ENCODE measurements at regions of chr3 and their contacts with region 1.

Region 1: DNA sequence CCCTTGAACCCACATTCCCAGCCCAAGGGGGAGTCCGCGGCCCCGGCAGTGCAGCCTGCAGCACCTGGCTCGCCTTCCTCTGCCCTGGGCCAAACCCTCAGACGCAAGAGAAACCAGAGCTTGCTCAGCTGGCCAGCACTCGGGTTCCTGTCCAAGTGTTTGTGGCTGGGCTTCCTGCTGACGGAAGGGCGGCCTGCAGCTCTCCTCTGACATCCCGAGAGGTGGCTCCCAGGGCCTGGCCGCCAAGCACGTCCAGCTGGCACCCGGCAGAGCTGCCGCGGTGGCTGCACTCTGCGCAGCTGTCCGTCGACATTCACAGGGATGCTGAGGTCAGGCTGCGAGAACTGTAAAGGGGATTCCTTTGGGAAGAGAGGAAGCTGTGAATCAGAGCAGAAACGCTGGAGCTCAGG is 85.6 kb downstream of the CPN2 start:
- DNase-seq: peak; percentile 74
- H3K4me3 ChIP-seq: no peak overlapping the region
- H3K27ac ChIP-seq: peak overlapping the region; percentile 31 to 48
- H3K4me1 ChIP-seq: peaks cover 10% of the 10 kb centered on the region
- H3K27me3 ChIP-seq: no peaks in the 10 kb centered on the region
- CTCF ChIP-seq: no peak
- POLR2A ChIP-seq: peak; percentile 23

Region 2: DNA sequence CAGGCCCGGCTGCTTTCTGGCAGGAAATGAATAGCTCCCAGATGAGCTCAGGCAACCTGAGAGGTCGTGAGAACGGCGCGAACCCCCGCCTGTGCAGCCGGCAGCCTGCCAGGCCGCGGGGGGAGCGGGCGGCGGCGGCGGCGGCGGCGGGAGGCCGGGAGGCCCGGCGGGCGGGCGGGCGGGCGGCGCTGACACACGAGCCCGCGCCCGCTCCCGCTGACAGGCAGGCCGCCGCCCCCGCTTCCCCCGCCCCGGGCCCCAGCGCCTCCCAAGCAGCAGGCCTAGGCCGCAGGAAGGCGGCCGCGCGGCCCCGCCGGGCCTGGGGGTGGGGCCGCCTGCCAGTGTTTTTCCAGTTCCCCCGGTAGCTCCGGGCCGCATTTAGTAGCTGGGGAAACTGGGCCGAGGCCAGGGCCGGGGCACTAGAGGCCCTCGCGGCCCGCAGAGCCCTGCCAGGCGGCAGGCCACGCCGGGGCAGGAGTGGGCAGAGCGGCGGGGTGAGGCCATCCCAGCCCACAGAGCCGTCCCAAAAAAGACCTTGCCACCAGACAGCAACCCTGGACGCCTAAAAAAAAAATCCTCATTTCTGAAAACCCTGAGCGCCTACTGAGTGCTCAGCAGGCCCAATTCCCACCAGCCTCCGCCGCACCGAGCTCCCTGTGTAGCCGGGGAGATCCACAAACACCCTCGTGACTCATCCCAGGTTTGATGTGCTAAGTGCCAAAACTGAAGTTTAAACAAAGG is 123.9 kb before region 1 on chr3:
- intact Hi-C with region 1: loop called (anchors 5 kb)
- DNase-seq: peak; percentile 95
- H3K4me3 ChIP-seq: peak overlapping the region; percentile 26 to 39
- H3K27ac ChIP-seq: peak overlapping the region; percentile 97 to 98
- H3K4me1 ChIP-seq: peaks cover 6% of the 10 kb centered on the region
- H3K27me3 ChIP-seq: no peaks in the 10 kb centered on the region
- CTCF ChIP-seq: no peak
- POLR2A ChIP-seq: no peak

Measured in prostate gland (tissue), 2 donors.